Endothelial cell of umbilical vein (primary cell): ENCODE measurements at regions of chr17 and their contacts with region 1.

Region 1: GRCh38 chr17:64572638-64573154 is 65.9 kb downstream of the CEP95 start:
- DNase-seq: peak; percentile 58
- H3K4me3 ChIP-seq: no peak overlapping the region
- H3K27ac ChIP-seq: peak overlapping the region; percentile 86
- H3K4me1 ChIP-seq: peaks cover 27% of the 10 kb centered on the region
- H3K27me3 ChIP-seq: no peaks in the 10 kb centered on the region
- CTCF ChIP-seq: no peak
- POLR2A ChIP-seq: peak; percentile 13

Region 2: GRCh38 chr17:64291254-64291851 is 281.3 kb before region 1 on chr17:
- CTCF ChIA-PET with region 1: no interaction called
- POLR2A ChIA-PET with region 1: no interaction called
- dilution Hi-C with region 1: no loop called
- intact Hi-C with region 1: no loop called
- DNase-seq: no peak
- H3K4me3 ChIP-seq: no peak overlapping the region
- H3K27ac ChIP-seq: no peak overlapping the region
- H3K4me1 ChIP-seq: no peaks in the 10 kb centered on the region
- H3K27me3 ChIP-seq: no peaks in the 10 kb centered on the region
- CTCF ChIP-seq: peak in 1 of 2 donors; percentile 48
- POLR2A ChIP-seq: no peak

Region 3: GRCh38 chr17:64596439-64596838 is 23.7 kb after region 1 on chr17:
- CTCF ChIA-PET with region 1: interaction called, 11 read pairs
- POLR2A ChIA-PET with region 1: no interaction called
- dilution Hi-C with region 1: no loop called
- intact Hi-C with region 1: no loop called
- DNase-seq: no peak
- H3K4me3 ChIP-seq: no peak overlapping the region
- H3K27ac ChIP-seq: no peak overlapping the region
- H3K4me1 ChIP-seq: peaks cover 10% of the 10 kb centered on the region
- H3K27me3 ChIP-seq: no peaks in the 10 kb centered on the region
- CTCF ChIP-seq: no peak
- POLR2A ChIP-seq: no peak

Region 4: DNA sequence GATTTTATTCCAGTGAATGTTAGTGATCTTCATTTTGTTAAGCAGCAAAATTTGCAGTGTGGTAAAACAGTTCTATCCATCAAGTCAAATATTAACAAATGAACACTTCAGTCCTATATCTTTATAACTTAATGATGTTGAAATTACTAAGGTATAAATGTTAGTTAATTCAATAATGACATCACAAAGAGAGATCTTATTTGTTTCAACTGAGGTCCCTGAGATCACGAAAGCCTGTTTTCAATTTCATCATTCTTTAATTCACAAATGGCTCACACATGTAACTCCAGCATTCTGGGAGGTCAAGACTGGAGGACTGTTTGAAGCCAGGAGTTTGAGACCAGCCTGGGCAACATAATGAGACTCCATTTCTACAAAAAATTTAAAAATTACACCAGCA is 75.5 kb after region 1 on chr17:
- CTCF ChIA-PET with region 1: interaction called, 12 read pairs
- POLR2A ChIA-PET with region 1: no interaction called
- dilution Hi-C with region 1: no loop called
- intact Hi-C with region 1: loop called (anchors 2 kb)
- DNase-seq: no peak
- H3K4me3 ChIP-seq: no peak overlapping the region
- H3K27ac ChIP-seq: no peak overlapping the region
- H3K4me1 ChIP-seq: peaks cover 24% of the 10 kb centered on the region
- H3K27me3 ChIP-seq: no peaks in the 10 kb centered on the region
- CTCF ChIP-seq: no peak
- POLR2A ChIP-seq: no peak

Region 5: GRCh38 chr17:64653325-64653984 is 80.8 kb after region 1 on chr17:
- CTCF ChIA-PET with region 1: interaction called, 12 read pairs
- POLR2A ChIA-PET with region 1: no interaction called
- dilution Hi-C with region 1: no loop called
- intact Hi-C with region 1: loop called (anchors 2 kb)
- DNase-seq: no peak
- H3K4me3 ChIP-seq: no peak overlapping the region
- H3K27ac ChIP-seq: peak overlapping the region; percentile 26
- H3K4me1 ChIP-seq: peaks cover 48% of the 10 kb centered on the region
- H3K27me3 ChIP-seq: no peaks in the 10 kb centered on the region
- CTCF ChIP-seq: no peak
- POLR2A ChIP-seq: no peak